Endothelial cell of umbilical vein (primary cell): ENCODE measurements at regions of chr1 and their contacts with region 1.

Region 1: DNA sequence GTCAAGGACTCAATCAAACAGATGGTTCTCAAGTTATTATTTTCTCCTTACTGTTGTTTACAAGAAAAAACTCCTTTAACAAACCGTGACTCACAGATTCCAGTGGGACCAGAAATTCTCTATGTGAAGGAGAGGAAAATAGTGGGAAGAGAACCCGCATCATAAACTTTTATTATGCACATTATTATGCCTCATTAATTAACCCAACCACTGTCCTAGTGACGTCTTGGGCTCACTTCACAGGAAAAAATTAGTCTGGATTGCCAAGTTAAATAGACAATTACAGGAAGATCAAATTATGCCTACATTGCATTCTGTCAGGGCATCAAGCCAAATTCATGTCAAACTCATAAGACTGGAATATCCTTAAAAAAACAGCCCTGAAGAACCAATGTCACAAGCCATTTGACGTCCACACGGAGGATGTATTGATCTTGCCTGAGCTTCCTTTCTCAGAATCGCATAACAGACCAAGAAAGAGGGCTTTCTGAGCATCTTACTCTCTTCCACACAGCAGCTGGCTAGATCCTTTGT is 347.8 kb downstream of the DUSP10 start:
- DNase-seq: peak; percentile 99
- H3K4me3 ChIP-seq: no peak overlapping the region
- H3K27ac ChIP-seq: peak overlapping the region; percentile 77
- H3K4me1 ChIP-seq: peaks cover 28% of the 10 kb centered on the region
- H3K27me3 ChIP-seq: peaks cover 2 to 3% of the 10 kb centered on the region in 2 experiments
- CTCF ChIP-seq: no peak
- POLR2A ChIP-seq: no peak

Region 2: DNA sequence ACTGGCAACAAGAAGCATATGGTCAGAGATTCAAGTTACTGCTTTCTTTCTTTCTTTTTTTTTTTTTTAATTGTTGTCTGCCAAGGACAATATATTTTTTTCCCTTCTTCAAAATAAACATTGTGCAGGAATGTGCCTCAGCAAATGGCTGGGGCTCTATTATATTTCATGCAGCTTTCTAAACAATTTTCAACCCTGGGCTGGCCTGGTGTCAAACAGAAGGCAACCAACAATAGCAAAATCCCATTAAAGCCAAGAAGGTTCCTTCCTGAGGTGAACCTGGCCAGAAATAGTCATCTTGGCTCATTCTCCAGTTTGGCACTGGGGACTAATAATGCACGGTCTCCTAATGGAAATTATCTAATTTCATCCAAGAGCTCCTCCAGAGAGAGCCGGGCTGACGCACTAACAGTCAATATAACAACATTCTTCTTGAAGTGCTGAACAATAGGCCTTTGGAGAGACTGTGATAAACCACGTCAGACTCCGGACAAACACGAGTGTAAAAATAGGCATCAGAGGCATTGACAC is 550.5 kb before region 1 on chr1:
- CTCF ChIA-PET with region 1: interaction called, 3 read pairs
- POLR2A ChIA-PET with region 1: no interaction called
- dilution Hi-C with region 1: no loop called
- intact Hi-C with region 1: loop called (anchors 1 kb)
- DNase-seq: peak; percentile 99
- H3K4me3 ChIP-seq: no peak overlapping the region
- H3K27ac ChIP-seq: peak overlapping the region; percentile 65
- H3K4me1 ChIP-seq: peaks cover 13% of the 10 kb centered on the region
- H3K27me3 ChIP-seq: peaks cover 0 to 3% of the 10 kb centered on the region in 2 experiments
- CTCF ChIP-seq: no peak
- POLR2A ChIP-seq: no peak

Region 3: DNA sequence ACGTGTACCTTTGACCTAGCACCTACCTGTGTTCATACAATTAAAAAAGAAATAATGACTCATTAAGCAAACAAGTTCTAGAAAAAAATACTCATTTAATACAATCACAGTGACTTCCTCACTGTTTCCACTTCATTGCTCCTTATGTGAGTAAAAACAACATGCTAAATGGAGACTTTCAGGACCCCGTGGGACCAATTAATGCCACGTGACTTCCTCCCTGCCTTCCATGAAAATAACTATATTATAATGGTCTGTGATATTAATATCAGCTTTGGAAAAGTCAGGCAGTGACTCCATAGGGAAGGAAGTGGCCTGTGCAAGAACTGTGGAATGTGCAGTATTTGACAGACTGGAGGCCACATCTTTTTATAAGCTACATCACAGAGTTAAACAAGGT is 177.0 kb before region 1 on chr1:
- CTCF ChIA-PET with region 1: no interaction called
- POLR2A ChIA-PET with region 1: no interaction called
- dilution Hi-C with region 1: no loop called
- intact Hi-C with region 1: loop called (anchors 1 kb)
- DNase-seq: peak; percentile 92
- H3K4me3 ChIP-seq: no peak overlapping the region
- H3K27ac ChIP-seq: peak overlapping the region; percentile 6
- H3K4me1 ChIP-seq: peaks cover 14% of the 10 kb centered on the region
- H3K27me3 ChIP-seq: peaks cover 0 to 3% of the 10 kb centered on the region in 2 experiments
- CTCF ChIP-seq: no peak
- POLR2A ChIP-seq: no peak

Region 4: GRCh38 chr1:221411283-221411682 is 17.2 kb after region 1 on chr1:
- CTCF ChIA-PET with region 1: interaction called, 5 read pairs
- POLR2A ChIA-PET with region 1: interaction called, 6 read pairs
- dilution Hi-C with region 1: no loop called
- intact Hi-C with region 1: loop called (anchors 1 kb)
- DNase-seq: peak; percentile 85
- H3K4me3 ChIP-seq: no peak overlapping the region
- H3K27ac ChIP-seq: peak overlapping the region; percentile 85
- H3K4me1 ChIP-seq: peaks cover 37% of the 10 kb centered on the region
- H3K27me3 ChIP-seq: peaks cover 0 to 6% of the 10 kb centered on the region in 2 experiments
- CTCF ChIP-seq: no peak
- POLR2A ChIP-seq: no peak

Region 5: DNA sequence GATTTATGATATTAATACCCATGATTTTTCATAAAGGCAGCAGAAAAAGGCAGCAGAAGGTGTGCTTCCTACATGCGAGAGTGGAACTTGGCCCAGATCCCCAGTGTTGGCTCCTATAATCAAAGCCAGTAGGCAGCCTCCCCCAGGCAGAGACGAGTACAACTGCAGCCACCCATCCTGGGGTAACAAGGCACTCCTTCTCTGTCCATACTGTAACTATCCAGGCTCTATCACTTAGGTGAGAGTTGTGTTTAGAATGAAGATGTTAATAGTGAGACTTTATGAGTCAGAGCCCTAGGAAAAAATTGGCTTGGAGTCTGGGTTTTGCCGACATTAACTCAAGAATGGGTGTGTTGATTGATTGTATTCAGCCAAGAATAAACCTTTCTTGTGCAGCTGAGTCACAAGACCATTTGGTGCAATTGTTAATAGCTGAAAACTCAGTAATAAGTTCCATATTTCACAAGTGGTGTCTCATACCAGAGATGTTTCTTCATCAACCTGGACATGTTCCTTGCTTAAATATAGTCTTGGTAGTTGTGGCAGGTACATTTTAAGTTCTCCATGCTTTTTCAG is 25.5 kb after region 1 on chr1:
- CTCF ChIA-PET with region 1: interaction called, 3 read pairs
- POLR2A ChIA-PET with region 1: interaction called, 6 read pairs
- dilution Hi-C with region 1: no loop called
- intact Hi-C with region 1: loop called (anchors 1 kb)
- DNase-seq: peak; percentile 60
- H3K4me3 ChIP-seq: no peak overlapping the region
- H3K27ac ChIP-seq: no peak overlapping the region
- H3K4me1 ChIP-seq: peaks cover 24% of the 10 kb centered on the region
- H3K27me3 ChIP-seq: no peaks in the 10 kb centered on the region
- CTCF ChIP-seq: no peak
- POLR2A ChIP-seq: no peak

Region 6: DNA sequence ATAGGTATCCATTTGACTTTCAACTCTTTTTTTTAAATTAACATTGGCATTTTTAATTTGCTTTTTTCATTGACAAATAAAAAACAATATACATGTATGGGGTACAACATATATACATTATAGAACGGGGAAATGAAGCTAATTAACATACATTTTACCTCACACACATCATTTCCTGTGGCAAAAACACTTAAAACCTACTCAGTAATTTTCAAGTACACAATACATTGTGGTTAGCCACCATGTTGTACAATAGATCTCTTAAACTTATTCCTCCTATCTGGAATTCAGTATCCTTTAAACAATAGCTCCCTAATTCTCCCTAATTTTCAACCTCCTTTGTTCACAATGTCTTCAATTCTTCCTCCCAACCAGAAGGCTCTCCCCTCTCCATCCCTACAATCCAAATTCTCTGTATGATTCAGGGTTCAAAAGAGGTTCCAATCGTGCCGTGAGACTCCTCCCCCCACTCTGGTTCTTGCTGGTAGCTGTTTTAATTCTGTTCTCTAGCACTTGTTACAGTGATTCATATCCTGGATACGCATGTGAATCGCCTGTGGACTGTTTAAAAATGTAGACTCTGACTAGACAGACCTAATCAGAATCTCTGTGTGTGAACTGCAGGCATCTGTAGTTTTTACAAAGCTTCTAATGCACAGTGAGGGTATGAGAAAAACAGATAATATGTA is 435.4 kb after region 1 on chr1:
- CTCF ChIA-PET with region 1: no interaction called
- POLR2A ChIA-PET with region 1: no interaction called
- dilution Hi-C with region 1: no loop called
- intact Hi-C with region 1: loop called (anchors 5 kb)
- DNase-seq: peak; percentile 93
- H3K4me3 ChIP-seq: no peak overlapping the region
- H3K27ac ChIP-seq: peak overlapping the region; percentile 63
- H3K4me1 ChIP-seq: peaks cover 58% of the 10 kb centered on the region
- H3K27me3 ChIP-seq: no peaks in the 10 kb centered on the region
- CTCF ChIP-seq: no peak
- POLR2A ChIP-seq: no peak